ENCODE measurements at regions of chr4 and their contacts with region 1.

Region 1: GRCh38 chr4:15001869-15002658 is at the start of gene CPEB2:
- DNase-seq: peak; percentile 98
- H3K4me3 ChIP-seq: peak within 1 kb of the TSS; percentile 95 to 99 (median 98)
- H3K27ac ChIP-seq: peak within 1 kb of the TSS; percentile 96 to 100 (median 100)
- H3K4me1 ChIP-seq: peaks cover 0 to 23% (median 15%) of the 10 kb centered on the region in 4 donors
- H3K27me3 ChIP-seq: no peaks in the 10 kb centered on the region
- CTCF ChIP-seq: no peak
- EP300 ChIP-seq: peak in 1 of 4 donors; percentile 24
- POLR2A ChIP-seq: peak; percentile 97 to 98
- total RNA-seq, gene CPEB2: 27.5 to 39.2 (median 30.4) TPM

Region 2: DNA sequence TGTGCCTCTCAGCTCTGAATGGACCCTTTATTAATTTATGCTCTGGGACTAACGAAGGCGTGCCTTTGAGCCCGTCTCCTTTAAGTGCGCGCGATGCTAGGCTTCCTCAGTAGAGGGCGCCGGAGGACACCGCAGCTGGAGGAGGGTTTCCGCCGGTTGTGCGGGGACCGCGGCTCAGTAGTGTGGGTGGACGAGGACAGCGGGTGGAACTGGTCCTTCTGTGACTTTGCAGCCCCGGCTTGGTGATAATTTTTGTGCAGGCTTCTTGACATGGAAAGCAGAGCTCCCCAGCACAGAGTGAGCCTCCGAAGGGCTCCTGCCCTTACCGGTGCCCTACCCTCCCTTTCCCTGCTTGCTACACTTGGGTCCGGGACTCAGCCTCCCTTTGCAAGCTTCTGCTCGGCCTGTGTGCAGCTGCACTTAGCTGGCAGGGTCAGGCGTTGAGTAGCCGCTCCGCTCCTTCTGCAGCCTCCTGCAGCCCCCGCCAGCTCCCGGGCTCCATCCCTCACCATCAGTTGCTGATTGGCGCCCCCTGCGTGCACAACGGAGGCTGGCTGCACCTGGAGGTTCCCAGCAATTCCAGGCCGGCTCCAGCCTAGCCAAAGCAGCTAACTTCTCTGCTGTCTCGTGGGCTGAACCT is 1347.8 kb before region 1 on chr4:
- intact Hi-C with region 1: loop called (anchors 10 kb)
- DNase-seq: peak; percentile 86
- H3K4me3 ChIP-seq: peak overlapping the region; percentile 26 to 53 (median 44)
- H3K27ac ChIP-seq: peak overlapping the region in 2 of 4 donors; percentile 38 to 40
- H3K4me1 ChIP-seq: peaks cover 0 to 15% (median 3%) of the 10 kb centered on the region in 4 donors
- H3K27me3 ChIP-seq: no peaks in the 10 kb centered on the region
- CTCF ChIP-seq: peak; percentile 45 to 85 (median 58)
- EP300 ChIP-seq: no peak
- POLR2A ChIP-seq: no peak

Region 3: DNA sequence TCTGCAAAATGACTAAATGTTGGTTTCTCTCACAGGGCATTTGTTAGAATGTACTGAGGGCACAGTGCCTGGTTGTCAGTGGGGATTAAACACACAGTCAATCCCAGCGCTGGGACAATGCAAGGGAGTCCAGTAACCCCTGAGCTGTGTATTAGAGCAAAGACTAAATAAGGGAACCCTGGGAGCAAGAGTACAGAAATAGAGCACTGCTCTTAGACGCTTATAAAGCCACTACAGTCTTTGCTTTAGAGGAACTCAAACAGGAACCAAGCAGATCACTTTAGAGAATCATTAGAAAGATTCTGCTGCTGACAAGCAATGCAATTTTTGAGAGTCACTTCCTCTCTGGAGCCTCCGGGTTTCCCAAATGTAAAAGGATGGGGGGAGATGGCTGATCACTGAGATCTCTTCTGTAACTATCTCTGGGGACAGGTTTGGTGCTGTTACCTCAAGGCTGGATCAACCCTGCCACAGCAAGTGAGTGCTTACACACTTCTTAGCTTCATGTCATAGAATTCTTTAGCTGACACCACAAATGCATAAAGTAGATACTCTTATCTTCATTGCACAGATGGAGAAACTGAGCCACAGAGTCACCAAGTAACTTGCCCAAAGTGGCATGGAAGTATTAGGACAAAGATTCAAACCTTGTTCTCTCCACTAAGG is 137.6 kb before region 1 on chr4:
- intact Hi-C with region 1: loop called (anchors 2 kb)
- DNase-seq: peak; percentile 87
- H3K4me3 ChIP-seq: peak overlapping the region in 1 of 4 donors; percentile 14
- H3K27ac ChIP-seq: peak overlapping the region; percentile 78 to 88 (median 83)
- H3K4me1 ChIP-seq: peaks cover 0 to 60% (median 53%) of the 10 kb centered on the region in 4 donors
- H3K27me3 ChIP-seq: no peaks in the 10 kb centered on the region
- CTCF ChIP-seq: no peak
- EP300 ChIP-seq: no peak
- POLR2A ChIP-seq: no peak

Region 4: DNA sequence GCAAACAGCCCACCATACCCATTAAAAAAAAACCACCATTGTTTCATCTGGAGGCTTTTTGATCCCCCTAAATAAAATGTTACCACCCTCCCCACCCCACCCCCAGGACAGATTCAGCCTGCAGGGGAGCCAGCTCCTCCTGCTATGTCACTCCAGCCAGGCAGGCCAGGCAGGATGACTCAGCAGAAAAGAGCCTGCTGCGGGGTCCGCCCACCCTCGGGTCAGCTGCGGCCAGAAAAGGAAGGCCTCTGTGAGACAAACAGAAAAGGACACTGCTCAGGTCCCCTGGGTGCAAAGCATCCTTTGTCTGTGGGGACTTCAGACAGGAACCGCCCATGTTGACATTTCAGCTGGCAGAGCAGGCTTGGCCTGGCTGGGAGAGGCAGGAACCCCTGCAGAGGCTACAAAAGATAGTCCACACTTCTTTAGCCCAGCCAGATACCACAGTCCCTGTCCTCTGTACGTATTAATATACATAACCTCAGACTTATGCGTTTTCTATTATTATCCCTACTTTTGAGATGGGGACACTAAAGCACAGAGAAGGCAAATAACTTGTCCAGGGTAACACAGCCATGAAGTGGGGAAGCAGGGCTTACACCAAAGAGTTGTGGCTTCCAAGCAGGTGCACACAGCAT is 147.9 kb after region 1 on chr4:
- intact Hi-C with region 1: loop called (anchors 5 kb)
- DNase-seq: peak; percentile 90
- H3K4me3 ChIP-seq: no peak overlapping the region
- H3K27ac ChIP-seq: peak overlapping the region; percentile 41 to 64 (median 52)
- H3K4me1 ChIP-seq: peaks cover 0 to 24% (median 16%) of the 10 kb centered on the region in 4 donors
- H3K27me3 ChIP-seq: no peaks in the 10 kb centered on the region
- CTCF ChIP-seq: peak in 1 of 4 experiments; percentile 18
- EP300 ChIP-seq: no peak
- POLR2A ChIP-seq: no peak

Region 5: DNA sequence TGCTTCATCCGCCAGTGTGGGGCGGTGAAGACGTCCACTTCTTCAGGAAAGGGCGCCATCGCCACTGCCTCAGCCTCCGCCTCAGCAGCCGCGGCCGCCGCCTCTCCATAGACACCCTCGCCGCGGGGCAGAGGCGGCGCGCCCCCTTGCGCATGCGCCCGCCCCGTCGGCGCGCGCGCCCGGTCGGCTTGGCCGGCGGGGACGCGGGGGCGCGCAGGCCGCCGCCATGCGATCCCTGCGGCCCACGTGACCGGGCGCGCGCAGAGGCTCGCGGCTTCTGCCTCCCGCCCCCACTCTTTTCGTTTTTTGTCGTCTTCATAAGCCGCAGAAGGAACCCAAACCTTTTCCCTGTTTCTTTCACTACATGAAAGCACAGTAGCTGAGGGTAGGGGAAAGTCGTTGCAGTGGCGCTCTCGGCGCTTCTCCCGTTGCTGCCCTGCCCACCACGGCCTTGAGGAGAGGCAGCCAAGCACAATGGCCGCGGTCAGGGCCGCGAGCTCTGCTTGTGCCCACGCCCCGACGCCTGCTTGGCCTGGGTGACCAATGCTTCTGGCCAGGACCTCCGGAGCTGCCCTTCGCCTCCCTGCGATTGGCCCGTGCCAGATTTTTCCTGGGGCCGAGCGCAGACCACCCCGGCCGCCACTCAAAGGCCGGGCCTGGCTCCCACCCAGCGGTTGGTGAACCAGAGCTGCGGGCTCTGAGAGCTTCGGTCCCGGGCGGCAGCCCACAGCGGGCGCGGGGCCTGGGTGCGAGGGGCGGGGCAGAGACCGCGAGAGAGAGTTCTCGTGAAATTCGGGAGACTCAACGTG is 653.4 kb after region 1 on chr4 and contains the start of gene FBXL5:
- intact Hi-C with region 1: loop called (anchors 1 kb)
- DNase-seq: peak; percentile 87
- H3K4me3 ChIP-seq: peak within 1 kb of the TSS; percentile 74 to 90 (median 82)
- H3K27ac ChIP-seq: peak within 1 kb of the TSS; percentile 94 to 99 (median 96)
- H3K4me1 ChIP-seq: peaks cover 0 to 44% (median 40%) of the 10 kb centered on the region in 4 donors
- H3K27me3 ChIP-seq: no peaks in the 10 kb centered on the region
- CTCF ChIP-seq: no peak
- EP300 ChIP-seq: no peak
- POLR2A ChIP-seq: peak; percentile 40 to 53
- total RNA-seq, gene FBXL5: 134 to 271 (median 202) TPM